Posterior cingulate gyrus (tissue), 11 donors: ENCODE measurements at regions of chr10 and their contacts with region 1.

Region 1: DNA sequence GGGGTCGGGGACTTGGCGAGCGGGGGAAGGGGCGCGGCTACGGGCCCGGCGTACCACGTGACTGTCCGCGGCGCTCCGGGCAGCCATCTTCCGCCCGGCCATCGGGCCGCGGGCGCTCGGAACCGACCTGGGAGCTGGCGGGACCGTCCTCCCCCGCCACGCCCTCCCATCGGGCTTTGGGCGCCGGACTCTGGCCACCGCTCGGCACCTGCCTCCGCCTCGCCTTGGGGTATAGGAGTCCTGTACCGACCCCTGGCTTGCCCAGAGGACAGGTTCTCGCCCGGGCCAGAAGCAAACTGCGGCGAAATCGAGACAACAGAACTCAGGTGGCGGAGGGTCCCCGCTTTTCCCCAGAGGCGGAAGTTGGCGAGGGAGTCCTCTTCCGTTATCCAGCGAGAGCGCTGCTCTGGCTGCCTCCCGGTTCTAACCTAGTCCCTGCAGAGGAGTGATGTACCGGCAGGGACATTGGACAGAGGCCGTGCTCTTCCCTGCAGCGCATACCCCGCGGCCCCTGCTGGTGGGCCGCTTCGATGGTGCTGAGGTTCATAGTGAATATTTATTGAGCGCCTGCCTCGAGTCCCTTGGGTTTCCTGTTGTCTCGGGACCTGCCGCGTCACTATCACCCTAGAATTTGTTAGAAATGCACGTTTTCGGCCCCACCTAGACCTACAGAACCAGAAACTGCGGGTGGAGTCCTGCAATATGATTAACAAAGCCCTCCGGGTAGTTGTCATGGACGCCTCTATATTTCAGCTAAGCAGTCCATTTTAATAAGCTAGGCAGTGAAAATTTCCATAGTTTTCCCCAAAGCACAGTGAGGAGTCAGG is 1.3 kb upstream of the SGMS1 start:
- DNase-seq: peak in 9 of 10 donors; percentile 46 to 96 (median 73)

Region 2: DNA sequence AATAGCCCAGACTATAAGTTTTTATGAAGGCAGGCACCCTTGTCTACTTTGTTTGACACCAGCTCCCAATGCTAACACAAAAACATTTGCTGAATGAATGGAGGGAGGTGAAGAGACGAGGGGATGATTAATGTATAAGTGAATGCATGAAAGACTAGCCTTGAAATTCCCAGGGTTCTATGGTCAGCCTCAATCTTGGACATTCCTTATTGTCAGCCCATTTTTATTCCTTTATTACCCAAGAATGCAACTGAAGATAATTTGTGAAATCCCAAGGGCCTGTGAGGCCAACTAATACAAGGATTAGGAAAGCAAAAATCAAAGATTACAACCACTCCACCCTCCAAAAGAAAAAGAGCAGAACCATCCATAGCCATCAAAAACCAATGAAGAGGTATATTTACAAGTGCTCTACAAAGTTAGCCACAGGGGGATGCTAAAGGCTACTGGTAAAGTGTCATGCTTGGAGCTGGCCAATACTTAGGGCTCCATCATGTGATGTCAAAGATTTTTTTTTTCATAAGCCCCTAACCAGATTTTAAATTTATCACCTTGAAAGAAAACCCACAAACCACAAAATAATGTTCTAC is 333.7 kb before region 1 on chr10:
- intact Hi-C with region 1: loop called (anchors 5 kb)
- DNase-seq: no peak

Region 3: DNA sequence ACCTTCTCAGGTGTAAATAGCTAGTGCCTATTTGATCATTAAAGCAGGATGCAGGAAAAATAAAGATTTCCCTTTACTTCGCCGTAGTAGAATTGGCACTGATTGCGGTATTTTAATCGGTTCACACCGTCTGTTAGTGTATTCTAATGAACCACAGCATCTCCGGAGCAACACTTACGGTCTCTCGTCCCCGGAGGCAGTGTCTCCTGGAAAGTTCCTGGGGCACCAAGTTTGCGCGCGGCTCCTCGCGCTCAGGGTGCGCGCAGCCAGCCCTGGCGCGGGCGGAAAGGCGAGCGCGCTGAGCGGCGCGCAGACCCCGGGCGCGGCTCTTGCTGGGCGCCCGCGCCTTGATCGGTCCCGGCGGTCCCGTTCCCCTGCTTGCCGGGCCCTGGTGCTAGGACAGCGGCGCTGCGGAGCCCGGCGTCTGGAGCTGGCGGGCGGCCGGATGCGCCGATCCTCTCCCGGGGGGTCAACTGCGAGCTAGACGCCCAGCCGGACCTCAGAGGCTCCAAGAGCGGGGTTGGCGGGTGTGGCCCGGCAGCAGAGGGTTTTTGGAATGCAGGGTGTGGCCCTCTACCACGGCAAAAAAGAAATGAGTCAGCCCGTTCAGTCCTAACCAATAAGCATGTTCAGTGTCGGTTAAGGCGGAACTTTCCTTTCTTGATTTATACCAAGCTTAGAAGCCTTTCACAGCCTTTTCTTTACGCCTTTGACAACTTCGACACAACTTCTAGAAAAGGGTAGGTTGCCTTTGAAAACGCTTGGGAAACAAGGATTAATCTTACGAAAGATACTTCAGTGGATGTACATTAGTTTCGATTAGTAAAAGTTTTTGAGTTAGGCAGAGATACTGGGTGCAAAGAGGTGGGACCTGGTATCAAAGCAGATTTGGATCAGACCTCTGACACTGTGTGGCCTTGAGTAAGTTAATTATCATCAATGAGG is 206.9 kb before region 1 on chr10:
- intact Hi-C with region 1: loop called (anchors 2 kb)
- DNase-seq: peak; percentile 19 to 92 (median 40)

Region 4: DNA sequence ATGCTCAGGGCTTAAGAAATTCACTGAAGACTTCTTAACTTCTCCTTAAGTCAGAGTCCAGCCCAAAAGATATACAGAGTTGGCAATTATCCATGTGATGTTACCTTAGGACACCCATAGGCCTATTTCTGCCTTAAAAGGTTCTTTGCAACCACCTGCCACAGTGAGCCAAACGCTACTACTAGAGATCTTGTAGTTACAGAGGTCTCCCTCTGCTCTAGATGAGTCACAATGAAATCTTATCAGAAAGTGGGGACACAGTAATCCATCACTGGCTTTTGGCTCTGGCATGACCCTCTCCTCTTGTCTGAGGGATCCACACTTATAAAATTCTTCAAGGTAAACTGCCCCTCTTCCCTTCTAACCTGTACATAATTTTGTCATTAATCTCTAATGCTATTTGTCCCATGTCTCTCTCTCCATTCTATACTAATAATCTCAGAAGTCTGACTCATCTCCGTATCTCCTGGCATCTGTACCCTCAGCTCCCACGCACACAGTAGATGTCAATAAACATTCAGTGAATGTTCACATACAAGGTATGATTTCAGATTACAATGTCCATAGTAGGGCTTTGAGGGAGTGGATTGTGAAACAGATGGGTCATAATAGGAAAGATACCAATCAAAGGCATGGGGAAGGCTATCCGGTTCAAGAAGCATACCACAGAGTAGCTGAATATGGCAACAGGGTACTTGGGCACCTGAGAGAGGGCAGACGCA is 113.4 kb before region 1 on chr10:
- intact Hi-C with region 1: loop called (anchors 5 kb)
- DNase-seq: no peak

Region 5: GRCh38 chr10:50552771-50553535 is 72.1 kb before region 1 on chr10:
- intact Hi-C with region 1: loop called (anchors 5 kb)
- DNase-seq: peak in 1 of 10 donors; percentile 69

Region 6: DNA sequence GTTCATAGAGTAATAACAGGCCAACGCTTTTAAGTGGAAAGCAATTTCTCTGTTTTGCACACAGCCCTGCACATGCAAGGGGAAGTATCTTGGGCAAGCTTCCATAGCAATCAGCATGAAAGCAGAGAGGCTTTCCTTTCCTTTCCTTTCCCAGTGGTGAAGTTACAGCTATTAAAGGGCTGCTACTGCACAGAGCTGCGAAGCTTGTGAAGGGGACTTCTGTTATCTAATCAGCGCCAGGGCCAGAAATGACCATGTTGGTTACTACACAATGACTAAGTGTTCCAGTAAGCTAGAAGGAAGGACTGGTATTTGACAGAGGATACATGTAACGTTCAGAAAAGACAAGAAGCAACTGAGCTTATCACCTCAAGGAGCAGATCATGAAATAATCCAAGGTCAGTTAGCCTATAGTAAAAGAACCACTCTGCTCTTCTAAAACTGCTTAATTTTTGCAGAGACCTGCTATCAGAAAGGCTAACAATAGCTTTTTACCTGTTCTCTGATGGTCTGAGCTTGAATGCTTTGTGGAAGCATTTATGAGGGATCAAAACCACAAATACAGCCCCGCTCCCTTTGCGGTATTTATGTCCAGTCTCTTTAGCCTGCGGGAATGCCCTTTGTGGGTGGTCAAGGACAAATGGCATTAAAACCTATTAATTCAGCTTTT is 47.3 kb before region 1 on chr10:
- intact Hi-C with region 1: loop called (anchors 5 kb)
- DNase-seq: peak in 2 of 10 donors; percentile 13 to 19